Dendritic cell treated with granulocyte-macrophage colony-stimulating factor and Interleukin-4, amounts not matched to agents 40 ng/mL and 50 ng/mL, for 4 days (primary cell): ENCODE measurements at regions of chr9 and their contacts with region 1.

Region 1: DNA sequence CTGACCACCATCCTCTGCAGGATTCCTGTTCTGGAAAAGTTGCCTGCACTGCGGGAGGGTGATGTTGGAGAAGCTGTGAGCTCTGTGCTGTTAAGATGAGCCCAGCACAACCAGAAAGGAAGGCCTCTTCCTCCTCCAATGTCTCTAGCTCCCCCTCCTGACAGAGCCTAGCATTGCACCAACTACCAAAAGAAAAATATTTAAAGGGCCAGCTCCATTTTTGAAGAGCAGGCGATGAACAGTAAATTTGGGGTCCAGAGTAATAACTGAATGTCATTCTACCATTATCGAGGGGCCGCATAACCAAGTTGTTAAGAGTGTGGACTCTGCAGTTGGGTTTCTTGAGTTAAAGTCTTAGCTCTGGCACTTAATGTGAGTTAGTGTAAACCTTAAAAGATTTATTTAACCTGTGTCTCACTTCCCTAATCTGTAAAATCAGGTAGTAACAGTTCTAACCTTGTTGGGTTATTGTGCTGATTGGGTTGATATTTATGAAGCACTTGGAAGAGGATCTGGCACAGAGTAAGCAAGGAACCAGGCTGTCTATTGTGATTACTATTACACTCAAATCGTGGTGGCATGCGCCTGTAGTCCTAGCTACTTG is 3.9 kb downstream of the TEX53 start:
- H3K4me3 Mint-ChIP-seq: no peak overlapping the region
- H3K27ac Mint-ChIP-seq: no peak overlapping the region
- H3K4me1 Mint-ChIP-seq: no peaks in the 10 kb centered on the region
- H3K27me3 Mint-ChIP-seq: peaks cover 5% of the 10 kb centered on the region

Region 2: GRCh38 chr9:114141553-114142402 is 511.9 kb before region 1 on chr9:
- intact Hi-C with region 1: no loop called
- H3K4me3 Mint-ChIP-seq: no peak overlapping the region
- H3K27ac Mint-ChIP-seq: no peak overlapping the region
- H3K4me1 Mint-ChIP-seq: no peaks in the 10 kb centered on the region
- H3K27me3 Mint-ChIP-seq: peaks cover 9% of the 10 kb centered on the region

Region 3: DNA sequence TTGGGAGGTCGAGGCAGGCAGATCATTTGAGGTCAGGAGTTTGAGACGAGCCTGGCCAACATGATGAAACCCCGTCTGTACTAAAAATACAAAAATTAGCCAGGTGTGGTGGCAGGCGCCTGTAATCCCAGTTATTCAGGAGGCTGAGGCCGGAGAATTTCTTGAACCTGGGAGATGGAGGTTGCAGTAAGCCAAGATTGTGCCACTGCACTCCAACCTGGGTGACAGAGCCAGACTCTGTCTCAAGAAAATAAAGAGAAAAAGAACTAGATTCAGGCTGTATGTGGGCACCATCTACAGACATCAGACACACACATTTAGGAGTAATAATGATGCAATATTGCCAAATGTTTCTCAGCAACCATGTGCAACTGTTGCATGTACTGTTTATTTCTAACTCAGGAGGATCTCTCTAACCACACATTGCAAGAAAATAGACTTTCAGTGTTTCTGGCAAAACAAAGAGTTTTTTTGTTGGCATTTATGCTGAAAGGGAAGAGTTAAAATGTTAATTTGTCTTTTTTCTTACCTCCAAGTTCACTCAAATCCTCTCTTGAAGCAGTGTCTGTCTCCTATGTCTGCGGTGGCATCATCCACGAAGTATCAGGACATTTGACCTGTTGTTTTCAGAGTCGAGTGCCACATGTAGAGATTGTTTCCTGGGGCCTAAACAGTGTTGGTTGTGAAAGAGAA is 335.8 kb before region 1 on chr9:
- intact Hi-C with region 1: no loop called
- H3K4me3 Mint-ChIP-seq: no peak overlapping the region
- H3K27ac Mint-ChIP-seq: no peak overlapping the region
- H3K4me1 Mint-ChIP-seq: peaks cover 7% of the 10 kb centered on the region
- H3K27me3 Mint-ChIP-seq: no peaks in the 10 kb centered on the region

Region 4: GRCh38 chr9:114339130-114339908 is 314.3 kb before region 1 on chr9:
- intact Hi-C with region 1: loop called (anchors 2 kb)
- H3K4me3 Mint-ChIP-seq: no peak overlapping the region
- H3K27ac Mint-ChIP-seq: peak overlapping the region; percentile 73
- H3K4me1 Mint-ChIP-seq: peaks cover 36% of the 10 kb centered on the region
- H3K27me3 Mint-ChIP-seq: no peaks in the 10 kb centered on the region

Region 5: DNA sequence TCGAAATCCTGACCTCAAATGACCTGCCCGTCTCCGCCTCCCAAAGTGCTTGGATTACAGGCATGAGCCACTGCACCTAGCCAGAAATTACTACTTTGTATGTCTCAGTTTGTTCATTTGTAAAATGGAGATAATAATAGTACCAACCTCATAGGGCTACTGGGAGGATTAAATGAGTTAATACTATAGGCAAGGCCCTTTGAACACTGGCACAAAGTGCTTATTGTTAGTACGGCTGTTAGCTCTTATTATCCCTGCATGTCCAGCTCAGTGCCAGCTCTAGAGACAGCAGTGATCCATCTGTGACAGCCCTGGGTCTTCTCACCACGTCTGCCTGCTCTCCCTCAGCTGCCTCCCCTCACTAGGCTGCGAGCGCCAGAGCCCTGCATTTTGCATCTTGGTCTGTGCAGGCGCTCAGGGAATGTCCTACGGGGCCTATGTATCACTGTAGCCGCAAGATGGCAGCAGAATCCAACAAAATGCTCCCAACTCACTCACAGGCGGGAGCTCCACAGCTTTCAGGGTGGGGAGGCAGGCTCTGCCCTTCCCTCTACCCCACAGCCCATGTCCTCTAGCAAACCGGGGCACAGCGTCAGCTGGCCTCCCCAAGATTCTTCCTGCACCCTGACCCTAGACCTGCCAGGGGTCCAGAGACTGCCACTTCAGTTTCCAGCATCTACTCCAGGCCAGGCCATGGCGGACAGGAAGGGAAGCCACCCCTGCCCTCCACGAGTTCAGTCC is 248.2 kb before region 1 on chr9:
- intact Hi-C with region 1: loop called (anchors 1 kb)
- H3K4me3 Mint-ChIP-seq: no peak overlapping the region
- H3K27ac Mint-ChIP-seq: no peak overlapping the region
- H3K4me1 Mint-ChIP-seq: peaks cover 19% of the 10 kb centered on the region
- H3K27me3 Mint-ChIP-seq: no peaks in the 10 kb centered on the region

Region 6: GRCh38 chr9:114487607-114488300 is 165.9 kb before region 1 on chr9:
- intact Hi-C with region 1: loop called (anchors 1 kb)
- H3K4me3 Mint-ChIP-seq: no peak overlapping the region
- H3K27ac Mint-ChIP-seq: no peak overlapping the region
- H3K4me1 Mint-ChIP-seq: peaks cover 16% of the 10 kb centered on the region
- H3K27me3 Mint-ChIP-seq: peaks cover 4% of the 10 kb centered on the region

Region 7: DNA sequence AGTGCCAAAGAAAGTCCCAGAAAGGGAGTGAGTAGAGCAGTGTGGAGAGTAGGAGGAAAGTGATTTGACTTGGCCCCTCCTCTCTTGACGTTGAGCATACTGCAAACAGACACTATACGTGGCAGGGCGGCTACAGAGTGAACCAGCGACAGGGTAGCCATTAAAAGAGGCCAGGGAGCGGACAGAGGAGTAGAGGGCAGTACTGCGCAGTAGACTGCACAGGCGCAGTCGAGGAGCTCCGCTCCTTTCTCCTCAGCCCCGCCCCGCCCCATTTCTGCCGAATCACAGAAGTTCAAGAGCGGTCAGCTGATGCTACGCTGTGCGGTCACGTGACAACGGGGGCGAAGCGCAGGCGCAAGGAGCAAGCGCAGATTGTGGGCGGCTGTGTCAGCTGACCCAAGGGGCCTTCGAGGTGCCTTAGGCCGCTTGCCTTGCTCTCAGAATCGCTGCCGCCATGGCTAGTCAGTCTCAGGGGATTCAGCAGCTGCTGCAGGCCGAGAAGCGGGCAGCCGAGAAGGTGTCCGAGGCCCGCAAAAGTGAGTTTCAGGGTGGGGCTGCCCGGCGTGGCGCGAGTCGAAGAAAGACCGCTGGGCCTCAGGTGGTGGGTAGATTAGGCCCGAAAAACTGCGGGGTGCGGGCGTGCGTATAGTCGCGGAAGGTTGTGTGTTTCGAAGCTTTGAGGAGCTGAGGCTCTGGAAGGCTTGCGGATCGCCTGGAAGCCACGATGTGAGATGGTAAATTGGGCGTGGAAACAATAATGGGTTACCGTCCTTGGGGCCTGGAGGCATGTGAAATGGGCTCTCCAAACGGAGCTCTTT is 66.1 kb before region 1 on chr9 and contains the start of gene ATP6V1G1:
- intact Hi-C with region 1: loop called (anchors 2 kb)
- H3K4me3 Mint-ChIP-seq: peak within 1 kb of the TSS; percentile 98
- H3K27ac Mint-ChIP-seq: peak within 1 kb of the TSS; percentile 100
- H3K4me1 Mint-ChIP-seq: peaks cover 46% of the 10 kb centered on the region
- H3K27me3 Mint-ChIP-seq: no peaks in the 10 kb centered on the region

Region 8: DNA sequence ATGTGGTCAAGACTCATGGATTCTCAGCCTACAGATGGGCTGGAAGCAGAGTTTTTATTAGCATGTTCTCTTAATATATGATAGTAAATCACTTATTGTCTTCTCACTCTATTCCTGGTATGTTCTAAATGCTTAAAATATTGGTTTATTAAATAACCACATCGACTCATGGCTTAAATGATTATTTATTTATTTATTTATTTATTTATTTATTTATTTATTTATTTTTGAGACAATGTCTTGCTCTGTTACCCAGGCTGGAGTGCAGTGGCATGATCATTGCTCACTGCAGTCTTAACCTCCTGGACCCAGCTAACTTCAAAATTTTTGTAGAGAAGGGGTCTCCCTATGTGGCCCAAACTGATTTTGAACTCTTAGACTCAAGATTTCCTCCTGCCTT is 921.5 kb after region 1 on chr9:
- intact Hi-C with region 1: no loop called
- H3K4me3 Mint-ChIP-seq: no peak overlapping the region
- H3K27ac Mint-ChIP-seq: no peak overlapping the region
- H3K4me1 Mint-ChIP-seq: no peaks in the 10 kb centered on the region
- H3K27me3 Mint-ChIP-seq: no peaks in the 10 kb centered on the region